ENCODE measurements at regions of chr11 and their contacts with region 1.

Region 1: DNA sequence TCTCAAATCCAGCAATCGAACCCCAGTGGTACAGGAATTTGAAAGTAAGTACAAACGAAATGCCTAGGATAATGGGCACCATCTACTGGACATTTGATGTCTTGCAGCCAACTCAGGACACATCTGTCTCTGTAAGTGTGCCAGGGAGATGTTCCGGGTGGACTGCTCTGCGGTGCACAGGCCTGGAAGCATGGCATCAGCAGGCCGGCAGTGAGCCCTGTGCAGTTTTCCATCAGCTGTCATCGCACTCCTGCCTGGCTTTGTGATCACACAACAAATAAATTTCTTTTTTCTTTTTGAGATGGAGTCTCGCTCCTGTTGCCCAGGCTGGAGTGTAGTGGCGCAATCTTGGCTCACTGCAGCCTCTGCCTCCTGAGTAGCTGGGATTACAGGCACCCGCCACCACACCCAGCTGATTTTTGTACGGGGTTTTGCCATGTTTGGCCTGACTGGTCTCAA is 71.0 kb downstream of the JAM3 start:
- DNase-seq: peak in 1 of 2 donors; percentile 84
- H3K4me3 ChIP-seq: peak overlapping the region in 1 of 2 donors; percentile 21
- H3K27ac ChIP-seq: peak overlapping the region; percentile 64 to 84
- H3K4me1 ChIP-seq: peaks cover 0 to 10% of the 10 kb centered on the region in 2 donors
- H3K27me3 ChIP-seq: no peaks in the 10 kb centered on the region
- CTCF ChIP-seq: peak; percentile 74 to 90 (median 88)

Region 2: DNA sequence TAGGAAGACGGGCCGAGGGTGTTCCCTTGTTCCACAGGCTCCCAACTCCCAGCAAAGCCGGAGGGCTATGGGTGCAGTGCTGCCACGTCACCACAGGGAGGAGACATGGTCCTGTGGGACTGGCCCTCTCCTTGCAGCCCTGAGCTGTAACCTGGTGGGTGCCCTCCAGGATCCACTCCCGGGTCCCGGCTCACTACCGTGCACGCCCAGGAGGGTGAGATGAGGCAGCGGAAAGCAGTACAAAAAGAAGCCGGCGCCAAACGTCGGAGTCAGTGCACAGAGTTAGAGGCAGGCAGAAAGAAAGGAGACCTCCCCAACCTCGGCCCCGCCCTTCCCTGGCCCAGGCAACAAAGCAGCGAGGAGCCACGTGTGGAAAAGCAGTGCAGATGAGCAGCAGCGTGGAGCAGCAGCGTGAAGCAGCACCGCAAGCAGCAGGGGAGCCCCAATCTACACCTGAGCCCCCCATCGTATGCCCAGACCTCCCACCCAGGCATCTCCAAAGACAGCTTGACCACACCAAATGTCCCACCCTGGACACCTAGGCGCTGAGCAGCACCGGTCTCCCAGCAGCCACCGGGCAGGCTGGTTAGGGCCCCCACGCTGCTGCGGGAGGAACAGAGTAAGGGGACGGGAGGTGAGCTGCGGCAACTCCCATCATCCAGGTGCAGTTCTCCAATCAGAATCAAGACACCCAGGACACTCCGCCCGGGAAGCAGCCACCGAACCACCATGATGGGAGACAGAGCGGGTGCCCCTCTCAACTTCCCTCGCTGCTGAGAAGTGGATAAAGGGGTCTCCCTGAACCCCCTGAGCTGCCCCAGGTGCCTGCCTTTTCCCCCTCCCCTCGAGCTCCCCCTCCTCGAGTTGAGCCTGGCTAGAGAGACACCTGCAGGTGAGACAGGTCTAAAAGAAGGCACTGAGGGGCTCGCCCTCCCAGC is 211.9 kb before region 1 on chr11:
- intact Hi-C with region 1: loop called (anchors 5 kb)
- DNase-seq: peak in 1 of 2 donors; percentile 72
- H3K4me3 ChIP-seq: no peak overlapping the region
- H3K27ac ChIP-seq: no peak overlapping the region
- H3K4me1 ChIP-seq: no peaks in the 10 kb centered on the region
- H3K27me3 ChIP-seq: no peaks in the 10 kb centered on the region
- CTCF ChIP-seq: peak; percentile 60 to 92 (median 86)

Region 3: DNA sequence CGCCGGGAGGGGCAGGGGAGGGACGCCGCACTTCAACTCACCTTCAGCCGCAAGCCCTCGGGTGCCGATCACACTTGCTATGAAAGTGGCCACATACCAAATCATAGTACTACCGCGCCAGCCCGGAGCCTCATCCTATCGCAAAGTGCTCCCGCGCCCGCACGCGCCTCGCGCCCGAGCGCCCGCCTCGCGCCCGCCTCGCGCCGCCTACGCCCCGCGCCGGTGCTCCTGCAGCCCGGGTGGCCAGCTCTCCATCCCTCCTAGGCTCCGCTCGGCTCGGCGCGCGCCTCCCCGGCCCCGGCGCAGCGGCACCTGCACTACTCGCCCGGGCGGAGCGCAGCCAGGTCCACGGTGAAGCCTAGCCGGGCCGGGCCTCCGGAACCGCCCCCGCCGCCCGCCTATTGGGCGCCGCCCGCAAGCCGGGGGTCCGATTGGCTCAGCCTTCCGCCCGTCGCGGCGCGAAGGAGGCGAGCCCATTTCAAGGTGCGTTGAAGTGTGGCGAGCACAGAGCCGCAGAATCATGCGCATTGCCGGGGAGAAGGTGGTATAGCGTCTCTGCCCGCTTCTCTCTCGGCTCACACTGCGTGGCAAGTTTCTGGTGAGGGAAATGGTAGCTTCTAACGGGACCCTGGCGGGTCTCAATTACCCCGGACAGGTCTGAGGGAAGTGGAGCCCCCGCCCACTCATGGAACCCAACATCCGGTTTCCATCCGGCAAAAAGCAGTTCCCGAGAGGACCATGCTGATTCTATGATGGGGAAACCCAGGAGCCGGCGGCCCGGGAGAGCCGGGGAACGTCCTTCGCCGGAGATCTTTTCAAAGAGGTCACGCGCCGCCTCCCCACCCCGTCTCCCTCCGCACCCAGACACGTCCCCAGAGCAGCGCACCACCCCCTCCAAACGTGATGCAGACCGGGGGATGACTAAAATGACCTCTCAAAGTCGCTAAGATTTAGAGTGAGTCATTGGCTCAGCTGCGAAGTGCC is 183.0 kb before region 1 on chr11 and contains the start of gene IGSF9B:
- intact Hi-C with region 1: loop called (anchors 5 kb)
- DNase-seq: peak in 1 of 2 donors; percentile 92
- H3K4me3 ChIP-seq: peak within 1 kb of the TSS; percentile 74 to 86
- H3K27ac ChIP-seq: peak within 1 kb of the TSS; percentile 87 to 93
- H3K4me1 ChIP-seq: peaks cover 10 to 35% of the 10 kb centered on the region in 2 donors
- H3K27me3 ChIP-seq: no peaks in the 10 kb centered on the region
- CTCF ChIP-seq: peak in 1 of 3 experiments; percentile 21
- total RNA-seq, gene IGSF9B: 162 TPM

Region 4: GRCh38 chr11:134068829-134069425 is 71.0 kb before region 1 on chr11 and contains the start of gene JAM3:
- intact Hi-C with region 1: loop called (anchors 1 kb)
- DNase-seq: peak; percentile 81 to 99
- H3K4me3 ChIP-seq: peak within 1 kb of the TSS; percentile 82 to 84
- H3K27ac ChIP-seq: peak within 1 kb of the TSS; percentile 95
- H3K4me1 ChIP-seq: peaks cover 0 to 10% of the 10 kb centered on the region in 2 donors
- H3K27me3 ChIP-seq: no peaks in the 10 kb centered on the region
- CTCF ChIP-seq: no peak
- total RNA-seq, gene JAM3: 59.8 TPM

Region 5: DNA sequence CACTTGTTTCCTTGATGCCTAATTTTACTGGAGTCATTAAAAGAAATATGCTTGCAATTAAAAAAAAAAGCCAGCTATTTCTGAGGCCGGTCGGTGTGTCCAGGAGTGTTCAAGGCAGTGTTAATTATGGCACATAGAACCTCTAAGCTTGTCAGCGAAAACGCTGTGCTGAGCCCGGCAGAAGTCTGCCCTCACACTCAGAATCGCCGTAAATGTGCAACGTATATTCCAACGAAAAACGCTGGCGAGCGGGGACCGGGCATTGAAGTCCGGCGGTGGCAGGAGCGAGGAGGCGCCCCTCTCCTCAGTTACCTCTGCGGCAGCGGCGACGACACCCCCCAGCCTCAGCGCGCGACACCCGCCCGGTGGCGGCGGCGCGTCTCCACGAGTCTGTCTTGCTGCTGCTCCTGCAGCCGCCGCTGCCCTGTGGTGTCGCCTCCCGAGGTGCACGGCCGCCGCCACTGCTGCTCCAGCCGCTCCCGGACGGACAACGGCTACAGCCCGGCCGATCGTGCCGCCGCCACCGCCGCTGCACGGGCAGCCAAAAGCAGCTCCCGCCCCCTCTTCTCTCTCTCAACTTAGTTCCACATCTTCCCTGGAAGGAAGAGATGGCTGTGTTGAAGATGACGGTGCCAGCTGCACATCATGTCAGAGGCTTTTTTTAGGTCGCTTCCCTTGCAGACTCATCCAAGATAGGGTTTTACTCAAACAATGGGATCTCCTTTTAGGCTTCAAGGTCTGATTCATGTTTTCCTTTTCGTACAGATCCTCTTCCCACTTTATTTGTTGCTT is 15.0 kb before region 1 on chr11:
- intact Hi-C with region 1: loop called (anchors 2 kb)
- DNase-seq: no peak
- H3K4me3 ChIP-seq: peak overlapping the region; percentile 56 to 70
- H3K27ac ChIP-seq: peak overlapping the region; percentile 61 to 90
- H3K4me1 ChIP-seq: peaks cover 19 to 41% of the 10 kb centered on the region in 2 donors
- H3K27me3 ChIP-seq: no peaks in the 10 kb centered on the region
- CTCF ChIP-seq: peak in 1 of 3 experiments; percentile 17

Region 6: DNA sequence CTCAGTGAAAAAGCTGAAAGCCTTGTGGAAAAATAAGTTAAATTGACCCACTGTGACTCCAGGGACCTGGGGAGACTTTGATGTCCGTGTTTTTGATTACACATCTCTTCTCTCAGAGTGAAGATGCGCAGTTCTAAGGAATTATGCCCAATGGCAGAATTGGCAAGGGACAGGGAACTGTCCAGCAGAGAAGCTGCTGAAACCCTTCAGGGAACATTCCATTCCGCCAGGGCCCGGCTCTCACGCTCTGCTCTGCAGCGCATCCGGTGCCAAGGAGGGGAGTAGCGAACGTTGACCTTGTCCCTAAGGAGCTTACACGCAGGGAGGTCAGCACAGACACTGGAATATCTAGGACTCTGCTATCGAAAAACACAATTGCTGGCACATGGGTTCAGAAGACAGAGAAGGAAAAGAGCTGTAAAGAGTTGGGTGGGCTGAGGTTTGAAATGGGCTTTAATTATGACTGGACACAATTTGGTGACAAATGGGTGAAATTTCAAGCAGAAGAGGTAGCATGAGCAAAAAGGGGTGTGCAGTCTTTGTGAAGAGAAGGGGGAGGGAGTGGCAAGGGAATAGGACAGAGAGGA is 336.6 kb after region 1 on chr11:
- intact Hi-C with region 1: no loop called
- DNase-seq: peak in 1 of 2 donors; percentile 5
- H3K4me3 ChIP-seq: no peak overlapping the region
- H3K27ac ChIP-seq: no peak overlapping the region
- H3K4me1 ChIP-seq: no peaks in the 10 kb centered on the region
- H3K27me3 ChIP-seq: no peaks in the 10 kb centered on the region
- CTCF ChIP-seq: no peak

Region 7: GRCh38 chr11:134578807-134579723 is 439.2 kb after region 1 on chr11:
- intact Hi-C with region 1: no loop called
- DNase-seq: no peak
- H3K4me3 ChIP-seq: no peak overlapping the region
- H3K27ac ChIP-seq: no peak overlapping the region
- H3K4me1 ChIP-seq: no peaks in the 10 kb centered on the region
- H3K27me3 ChIP-seq: no peaks in the 10 kb centered on the region
- CTCF ChIP-seq: no peak

Measured in ascending aorta (tissue), 2 donors.